ENCODE measurements at regions of chr5 and their contacts with region 1.

Region 1: GRCh38 chr5:109304309-109304708 is 105.5 kb downstream of the PJA2 start:
- DNase-seq: no peak
- ATAC-seq: no peak
- H3K4me3 ChIP-seq: no peak overlapping the region
- H3K27ac ChIP-seq: no peak overlapping the region
- H3K4me1 ChIP-seq: no peaks in the 10 kb centered on the region
- H3K27me3 ChIP-seq: peaks cover 0 to 2% (median 0%) of the 10 kb centered on the region in 9 donors
- CTCF ChIP-seq: peak in 1 of 12 donors; percentile 4
- POLR2A ChIP-seq: no peak

Region 2: GRCh38 chr5:108953940-108954339 is 350.4 kb before region 1 on chr5:
- intact Hi-C with region 1: loop called in 1 of 10 experiments (anchors 10 kb)
- DNase-seq: no peak
- ATAC-seq: no peak
- H3K4me3 ChIP-seq: no peak overlapping the region
- H3K27ac ChIP-seq: no peak overlapping the region
- H3K4me1 ChIP-seq: no peaks in the 10 kb centered on the region
- H3K27me3 ChIP-seq: no peaks in the 10 kb centered on the region
- CTCF ChIP-seq: no peak
- POLR2A ChIP-seq: no peak

Measured in heart left ventricle (tissue), 16 donors.